ENCODE measurements at regions of chr10 and their contacts with region 1.

Region 1: GRCh38 chr10:51063659-51064535 is 10.4 kb upstream of the PRKG1 start:
- DNase-seq: peak; percentile 22
- H3K4me3 ChIP-seq: no peak overlapping the region; a peak in 1 of 4 replicates
- H3K27ac ChIP-seq: no peak overlapping the region
- H3K4me1 ChIP-seq: no peaks in the 10 kb centered on the region; a peak in 1 of 4 replicates
- H3K27me3 ChIP-seq: no peaks in the 10 kb centered on the region
- CTCF ChIP-seq: peak; percentile 88
- EP300 ChIP-seq: no peak
- RAD21 ChIP-seq: peak; percentile 88

Region 2: DNA sequence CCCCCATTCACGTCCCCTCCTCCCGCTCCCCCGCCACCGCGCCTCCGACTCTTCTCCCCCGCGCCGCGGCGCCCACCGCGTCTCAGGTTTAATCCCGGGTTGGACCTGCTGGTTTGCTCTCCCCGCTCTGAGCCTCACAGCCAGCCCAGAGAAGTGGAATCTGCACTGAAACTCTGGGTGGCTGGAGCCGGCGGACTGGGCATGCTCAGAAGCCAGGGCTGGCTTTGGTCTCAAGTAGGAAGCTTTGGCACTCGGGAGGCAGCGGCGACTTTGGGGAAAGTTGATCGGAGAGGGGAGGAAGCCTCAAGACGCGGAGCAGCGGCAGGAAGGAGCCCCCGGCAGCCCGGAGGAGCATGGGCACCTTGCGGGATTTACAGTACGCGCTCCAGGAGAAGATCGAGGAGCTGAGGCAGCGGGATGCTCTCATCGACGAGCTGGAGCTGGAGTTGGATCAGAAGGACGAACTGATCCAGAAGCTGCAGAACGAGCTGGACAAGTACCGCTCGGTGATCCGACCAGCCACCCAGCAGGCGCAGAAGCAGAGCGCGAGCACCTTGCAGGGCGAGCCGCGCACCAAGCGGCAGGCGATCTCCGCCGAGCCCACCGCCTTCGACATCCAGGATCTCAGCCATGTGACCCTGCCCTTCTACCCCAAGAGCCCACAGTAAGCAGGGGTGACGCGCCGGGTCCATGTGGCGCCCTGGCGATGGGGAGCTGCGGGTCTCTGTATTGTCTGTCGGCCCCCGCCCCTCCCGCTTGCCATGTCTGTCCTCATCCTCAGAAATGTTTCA is 10.5 kb after region 1 on chr10 and contains the start of gene PRKG1:
- CTCF ChIA-PET with region 1: interaction called, 34 read pairs
- POLR2A ChIA-PET with region 1: no interaction called
- DNase-seq: peak; percentile 82
- H3K4me3 ChIP-seq: peak within 1 kb of the TSS; percentile 57 to 85
- H3K27ac ChIP-seq: peak within 1 kb of the TSS; percentile 75 to 80
- H3K4me1 ChIP-seq: peaks cover 0 to 9% of the 10 kb centered on the region in 2 experiments; a peak in 2 of 4 replicates
- H3K27me3 ChIP-seq: no peaks in the 10 kb centered on the region
- CTCF ChIP-seq: no peak
- EP300 ChIP-seq: no peak
- RAD21 ChIP-seq: no peak
- polyA plus RNA-seq, gene PRKG1: 4.1 and 4.3 TPM in 2 replicates

Region 3: GRCh38 chr10:51206500-51206899 is 142.6 kb after region 1 on chr10:
- CTCF ChIA-PET with region 1: no interaction called
- POLR2A ChIA-PET with region 1: no interaction called
- DNase-seq: no peak
- H3K4me3 ChIP-seq: no peak overlapping the region
- H3K27ac ChIP-seq: no peak overlapping the region
- H3K4me1 ChIP-seq: no peaks in the 10 kb centered on the region; a peak in 1 of 4 replicates
- H3K27me3 ChIP-seq: no peaks in the 10 kb centered on the region
- CTCF ChIP-seq: no peak
- EP300 ChIP-seq: no peak
- RAD21 ChIP-seq: no peak

Region 4: GRCh38 chr10:51389415-51390321 is 325.8 kb after region 1 on chr10:
- CTCF ChIA-PET with region 1: interaction called, 15 read pairs
- POLR2A ChIA-PET with region 1: no interaction called
- DNase-seq: peak; percentile 69
- H3K4me3 ChIP-seq: peak overlapping the region in 1 of 2 experiments; percentile 31; a peak in 1 of 4 replicates
- H3K27ac ChIP-seq: peak overlapping the region; percentile 54 to 82; a peak in 3 of 4 replicates
- H3K4me1 ChIP-seq: no peaks in the 10 kb centered on the region; a peak in 1 of 4 replicates
- H3K27me3 ChIP-seq: no peaks in the 10 kb centered on the region
- CTCF ChIP-seq: peak; percentile 81
- EP300 ChIP-seq: peak; percentile 29 to 93; a peak in 3 of 4 replicates
- RAD21 ChIP-seq: peak; percentile 87

Region 5: GRCh38 chr10:51960494-51960895 is 896.6 kb after region 1 on chr10:
- CTCF ChIA-PET with region 1: interaction called, 31 read pairs
- POLR2A ChIA-PET with region 1: no interaction called
- DNase-seq: peak; percentile 34
- H3K4me3 ChIP-seq: peak overlapping the region in 1 of 2 experiments; percentile 27; a peak in 1 of 4 replicates
- H3K27ac ChIP-seq: peak overlapping the region in 1 of 2 experiments; percentile 22; a peak in 2 of 4 replicates
- H3K4me1 ChIP-seq: no peaks in the 10 kb centered on the region; a peak in 1 of 4 replicates
- H3K27me3 ChIP-seq: no peaks in the 10 kb centered on the region
- CTCF ChIP-seq: peak; percentile 71
- EP300 ChIP-seq: peak in 1 of 2 experiments; percentile 9; a peak in 1 of 4 replicates
- RAD21 ChIP-seq: peak; percentile 86